Dorsolateral prefrontal cortex (tissue), 120 donors: ENCODE measurements at regions of chr3 and their contacts with region 1.

Region 1: DNA sequence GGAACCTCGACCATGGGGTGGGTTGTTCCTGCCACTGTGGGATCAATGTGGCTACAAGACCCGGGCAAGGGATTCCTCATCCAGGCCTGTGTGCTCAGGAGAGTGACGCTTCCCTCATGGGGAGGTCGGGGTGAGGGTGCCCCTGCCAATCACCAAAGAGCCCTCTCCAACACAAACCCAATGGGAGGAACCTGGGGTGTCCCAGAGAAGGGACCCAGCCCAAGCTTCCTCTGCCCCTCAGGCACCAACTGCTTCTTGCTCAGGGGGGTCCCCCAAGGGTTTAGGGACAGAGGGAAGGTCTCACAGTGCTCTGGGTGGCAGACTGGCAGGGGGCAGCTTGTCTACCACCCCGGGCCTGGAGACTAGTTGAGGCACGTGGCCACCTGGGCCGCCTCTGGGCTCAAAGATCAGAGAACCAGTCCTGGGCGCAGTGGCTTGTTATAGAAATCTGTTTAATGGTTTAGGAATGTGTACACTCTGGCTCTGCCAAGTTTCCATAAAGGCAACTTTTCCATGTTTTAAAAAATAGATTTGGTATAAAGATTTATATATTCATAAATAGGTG is 26.6 kb downstream of the GP9 start:
- DNase-seq: no peak
- H3K4me3 ChIP-seq: no peak overlapping the region
- H3K27ac ChIP-seq: peak overlapping the region in 19 of 59 donors; percentile 7 to 72 (median 39)
- H3K27me3 ChIP-seq: no peaks in the 10 kb centered on the region
- CTCF ChIP-seq: no peak

Region 2: GRCh38 chr3:128969993-128970739 is 117.1 kb before region 1 on chr3:
- intact Hi-C with region 1: loop called in 1 of 2 experiments (anchors 10 kb)
- DNase-seq: peak in 4 of 10 donors; percentile 28 to 52 (median 32)
- H3K4me3 ChIP-seq: no peak overlapping the region
- H3K27ac ChIP-seq: no peak overlapping the region
- H3K27me3 ChIP-seq: no peaks in the 10 kb centered on the region
- CTCF ChIP-seq: peak; percentile 47 to 95 (median 87)

Region 3: DNA sequence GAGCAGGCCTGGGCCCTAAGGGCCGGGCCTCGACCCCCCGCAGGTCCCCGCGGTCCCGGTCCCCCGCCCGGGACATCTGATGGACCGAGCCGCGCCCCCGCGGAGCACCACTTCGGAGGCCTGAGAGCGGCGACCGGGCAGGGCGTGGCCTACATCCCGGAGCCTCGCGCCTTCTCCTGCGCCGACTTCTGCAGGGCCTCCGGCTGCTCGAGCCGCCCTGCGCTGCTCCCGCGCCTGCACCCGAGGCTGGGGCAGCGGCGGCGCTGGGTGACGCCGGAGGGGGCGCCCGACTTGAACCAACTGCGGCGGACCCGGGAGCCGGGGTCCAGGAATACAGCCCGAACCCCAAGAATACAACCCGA is 41.6 kb before region 1 on chr3:
- intact Hi-C with region 1: loop called in 1 of 2 experiments (anchors 5 kb)
- DNase-seq: peak in 3 of 10 donors; percentile 29 to 46 (median 35)
- H3K4me3 ChIP-seq: peak overlapping the region in 52 of 59 donors; percentile 1 to 54 (median 30)
- H3K27ac ChIP-seq: no peak overlapping the region
- H3K27me3 ChIP-seq: peaks cover 0 to 49% (median 28%) of the 10 kb centered on the region in 45 donors
- CTCF ChIP-seq: peak in 1 of 56 donors; percentile 5

Region 4: DNA sequence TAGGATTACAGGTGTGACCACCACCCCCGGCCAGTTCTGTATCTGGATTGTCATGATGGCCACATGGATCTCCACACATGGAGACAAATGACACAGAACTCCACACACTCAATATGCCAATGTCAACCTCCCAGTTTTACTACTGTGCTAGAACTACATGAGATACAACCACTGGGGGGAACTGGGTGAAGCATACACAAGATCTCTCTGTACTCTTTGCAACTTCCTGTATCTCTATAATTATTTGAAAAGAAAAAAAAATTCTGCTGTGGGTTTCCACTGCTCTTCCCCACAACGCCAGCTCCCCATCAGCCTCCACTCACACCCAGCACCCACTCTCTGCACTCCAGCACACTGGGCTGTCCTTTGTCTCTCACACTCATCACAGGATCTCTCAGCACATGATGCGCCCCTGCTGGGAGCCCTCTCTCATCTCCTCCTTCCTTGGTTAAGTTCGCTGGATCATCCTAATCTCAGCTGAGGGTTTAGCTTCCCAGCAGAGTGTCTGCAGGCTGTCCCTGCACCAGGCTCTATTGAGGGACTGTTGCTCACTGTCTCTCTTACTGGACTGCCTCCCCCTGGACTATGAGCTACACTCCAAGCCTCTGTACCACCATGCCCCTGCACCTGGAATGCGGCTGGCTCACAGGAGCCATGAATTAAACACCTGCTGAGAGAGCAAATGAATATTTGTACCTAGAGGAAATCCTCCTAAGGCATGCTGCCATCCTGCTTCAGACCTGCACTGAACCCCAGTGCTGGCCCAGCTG is 45.1 kb after region 1 on chr3:
- intact Hi-C with region 1: no loop called
- DNase-seq: peak in 2 of 10 donors; percentile 35 to 55
- H3K4me3 ChIP-seq: no peak overlapping the region
- H3K27ac ChIP-seq: peak overlapping the region in 20 of 59 donors; percentile 10 to 52 (median 19)
- H3K27me3 ChIP-seq: no peaks in the 10 kb centered on the region
- CTCF ChIP-seq: no peak